Gastrocnemius medialis (tissue), 4 donors: ENCODE measurements at regions of chr10 and their contacts with region 1.

Region 1: GRCh38 chr10:99711129-99711719 is 20.7 kb downstream of the COX15 start:
- DNase-seq: no peak
- ATAC-seq: peak; percentile 54 to 75
- H3K4me3 ChIP-seq: no peak overlapping the region
- H3K27ac ChIP-seq: no peak overlapping the region
- H3K4me1 ChIP-seq: no peaks in the 10 kb centered on the region
- H3K27me3 ChIP-seq: no peaks in the 10 kb centered on the region
- CTCF ChIP-seq: peak in 3 of 5 experiments; percentile 25 to 52 (median 34)
- POLR2A ChIP-seq: no peak

Region 2: GRCh38 chr10:99560277-99561126 is 150.7 kb before region 1 on chr10:
- in situ Hi-C with region 1: no loop called
- intact Hi-C with region 1: loop called (anchors 2 kb)
- DNase-seq: peak; percentile 21 to 35
- ATAC-seq: peak; percentile 73 to 92
- H3K4me3 ChIP-seq: no peak overlapping the region
- H3K27ac ChIP-seq: no peak overlapping the region
- H3K4me1 ChIP-seq: no peaks in the 10 kb centered on the region
- H3K27me3 ChIP-seq: peaks cover 0 to 7% (median 6%) of the 10 kb centered on the region in 3 donors
- CTCF ChIP-seq: peak; percentile 61 to 84 (median 75)
- POLR2A ChIP-seq: no peak